Mammary epithelial cell (primary cell): ENCODE measurements at regions of chr6 and their contacts with region 1.

Region 1: DNA sequence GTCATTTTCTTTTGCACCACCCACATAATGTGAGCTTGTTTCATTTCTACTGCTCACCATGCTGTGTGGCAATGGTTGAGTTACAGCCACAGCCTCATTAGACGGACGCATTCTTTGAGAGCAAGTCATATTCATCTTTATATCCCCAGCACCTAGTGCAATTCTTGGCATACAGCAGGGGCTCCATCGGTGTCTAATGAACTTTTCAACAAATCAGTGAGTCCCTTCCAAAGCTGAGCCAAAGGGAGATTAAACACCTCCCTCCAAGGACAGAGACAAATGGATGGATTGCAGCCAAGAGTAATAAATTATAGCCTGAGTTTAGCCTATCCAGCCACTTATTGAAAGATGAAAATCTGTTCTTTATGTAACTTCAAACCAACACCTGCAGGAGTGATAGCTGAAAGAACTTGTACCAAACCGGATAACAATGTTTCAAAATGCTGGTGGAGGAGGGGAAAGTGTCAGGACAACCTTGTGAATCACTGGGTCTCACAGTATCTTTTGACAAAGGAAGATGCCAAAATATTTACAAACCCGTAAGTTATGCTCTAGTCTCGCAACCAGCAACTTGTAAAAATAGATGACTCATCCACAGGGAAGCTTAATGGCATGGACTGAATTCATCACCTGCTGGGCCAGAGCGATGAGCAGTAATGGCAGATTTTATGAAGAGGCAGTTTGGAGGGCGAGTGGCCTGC is 139.0 kb downstream of the PXDC1 start:
- DNase-seq: peak; percentile 95
- H3K4me3 ChIP-seq: no peak overlapping the region
- H3K27ac ChIP-seq: peak overlapping the region; percentile 69
- H3K4me1 ChIP-seq: peaks cover 31% of the 10 kb centered on the region
- H3K27me3 ChIP-seq: no peaks in the 10 kb centered on the region
- CTCF ChIP-seq: no peak

Region 2: GRCh38 chr6:3269281-3269975 is 343.1 kb before region 1 on chr6:
- CTCF ChIA-PET with region 1: no interaction called
- dilution Hi-C with region 1: no loop called
- in situ Hi-C with region 1: no loop called
- intact Hi-C with region 1: no loop called
- DNase-seq: no peak
- H3K4me3 ChIP-seq: no peak overlapping the region
- H3K27ac ChIP-seq: no peak overlapping the region
- H3K4me1 ChIP-seq: no peaks in the 10 kb centered on the region
- H3K27me3 ChIP-seq: no peaks in the 10 kb centered on the region
- CTCF ChIP-seq: no peak

Region 3: GRCh38 chr6:3471711-3472110 is 140.8 kb before region 1 on chr6:
- CTCF ChIA-PET with region 1: no interaction called
- dilution Hi-C with region 1: no loop called
- in situ Hi-C with region 1: no loop called
- intact Hi-C with region 1: loop called (anchors 5 kb)
- DNase-seq: peak; percentile 39
- H3K4me3 ChIP-seq: no peak overlapping the region
- H3K27ac ChIP-seq: no peak overlapping the region
- H3K4me1 ChIP-seq: peaks cover 7% of the 10 kb centered on the region
- H3K27me3 ChIP-seq: no peaks in the 10 kb centered on the region
- CTCF ChIP-seq: no peak

Region 4: GRCh38 chr6:3566812-3567211 is 45.7 kb before region 1 on chr6:
- CTCF ChIA-PET with region 1: no interaction called
- dilution Hi-C with region 1: no loop called
- in situ Hi-C with region 1: no loop called
- intact Hi-C with region 1: no loop called
- DNase-seq: peak; percentile 47
- H3K4me3 ChIP-seq: no peak overlapping the region
- H3K27ac ChIP-seq: no peak overlapping the region
- H3K4me1 ChIP-seq: no peaks in the 10 kb centered on the region
- H3K27me3 ChIP-seq: no peaks in the 10 kb centered on the region
- CTCF ChIP-seq: no peak

Region 5: DNA sequence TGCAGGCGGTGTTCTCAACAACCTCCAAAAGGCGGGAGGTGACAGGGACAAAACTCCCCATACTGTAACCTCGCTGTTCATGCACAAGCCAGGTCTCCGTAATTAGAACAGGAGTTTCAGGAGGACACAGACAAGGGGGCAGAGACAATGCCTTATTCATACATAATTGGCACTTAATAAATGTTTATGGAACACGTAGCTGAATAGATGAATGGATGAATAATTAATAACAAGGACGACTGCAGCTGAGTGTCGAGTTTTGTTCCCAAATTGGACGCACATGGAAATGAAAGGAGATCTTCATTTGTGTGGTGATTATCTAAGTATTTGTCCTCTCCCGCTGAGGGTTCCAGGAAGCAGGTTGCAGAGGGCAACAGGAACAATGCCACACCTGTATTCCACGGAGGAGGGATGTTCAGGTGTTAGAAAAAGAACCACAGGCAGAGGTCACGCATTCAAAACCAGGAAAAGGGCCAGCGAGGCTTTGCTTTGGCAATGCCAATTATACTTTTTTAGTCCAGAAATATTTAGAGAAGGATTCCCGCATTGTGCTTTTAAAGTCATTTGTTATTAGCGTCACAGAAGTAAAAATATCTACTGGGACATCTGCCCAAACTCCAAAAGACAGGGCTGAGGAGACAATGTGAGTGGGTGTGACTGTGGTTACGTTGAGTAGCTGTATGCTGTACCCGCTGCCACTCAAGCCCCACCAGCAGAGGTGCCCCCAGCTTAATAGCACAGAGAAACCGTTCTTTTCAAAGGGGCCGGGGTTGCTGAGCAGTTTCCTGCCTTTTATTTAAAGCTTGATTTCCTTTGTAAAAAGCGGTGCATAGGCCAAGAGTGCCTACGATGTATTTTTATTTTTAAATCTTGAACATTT is 15.7 kb after region 1 on chr6:
- CTCF ChIA-PET with region 1: no interaction called
- dilution Hi-C with region 1: no loop called
- in situ Hi-C with region 1: no loop called
- intact Hi-C with region 1: no loop called
- DNase-seq: peak; percentile 6
- H3K4me3 ChIP-seq: no peak overlapping the region
- H3K27ac ChIP-seq: no peak overlapping the region
- H3K4me1 ChIP-seq: peaks cover 12% of the 10 kb centered on the region
- H3K27me3 ChIP-seq: no peaks in the 10 kb centered on the region
- CTCF ChIP-seq: no peak

Region 6: GRCh38 chr6:3663081-3663480 is 50.6 kb after region 1 on chr6:
- CTCF ChIA-PET with region 1: no interaction called
- dilution Hi-C with region 1: no loop called
- in situ Hi-C with region 1: no loop called
- intact Hi-C with region 1: no loop called
- DNase-seq: no peak
- H3K4me3 ChIP-seq: no peak overlapping the region
- H3K27ac ChIP-seq: no peak overlapping the region
- H3K4me1 ChIP-seq: no peaks in the 10 kb centered on the region
- H3K27me3 ChIP-seq: no peaks in the 10 kb centered on the region
- CTCF ChIP-seq: no peak

Region 7: GRCh38 chr6:3712827-3713665 is 100.6 kb after region 1 on chr6:
- CTCF ChIA-PET with region 1: no interaction called
- dilution Hi-C with region 1: loop called (anchors 10 kb)
- in situ Hi-C with region 1: no loop called
- intact Hi-C with region 1: no loop called
- DNase-seq: no peak
- H3K4me3 ChIP-seq: no peak overlapping the region
- H3K27ac ChIP-seq: no peak overlapping the region
- H3K4me1 ChIP-seq: peaks cover 10% of the 10 kb centered on the region
- H3K27me3 ChIP-seq: no peaks in the 10 kb centered on the region
- CTCF ChIP-seq: no peak